H1 (cell line): ENCODE measurements at regions of chr2 and their contacts with region 1.

Region 1: GRCh38 chr2:143686585-143687164 is 557.5 kb downstream of the ARHGAP15 start:
- DNase-seq: no peak
- H3K4me3 ChIP-seq: no peak overlapping the region
- H3K27ac ChIP-seq: no peak overlapping the region
- H3K4me1 ChIP-seq: peaks cover 0 to 7% (median under 1%) of the 10 kb centered on the region in 4 experiments; a peak in 1 of 7 replicates
- H3K27me3 ChIP-seq: no peaks in the 10 kb centered on the region
- CTCF ChIP-seq: peak in 2 of 3 experiments; percentile 12 to 55; a peak in 2 of 4 replicates
- EP300 ChIP-seq: no peak
- POLR2A ChIP-seq: no peak
- RAD21 ChIP-seq: peak; percentile 28 to 51; a peak in 3 of 4 replicates

Region 2: DNA sequence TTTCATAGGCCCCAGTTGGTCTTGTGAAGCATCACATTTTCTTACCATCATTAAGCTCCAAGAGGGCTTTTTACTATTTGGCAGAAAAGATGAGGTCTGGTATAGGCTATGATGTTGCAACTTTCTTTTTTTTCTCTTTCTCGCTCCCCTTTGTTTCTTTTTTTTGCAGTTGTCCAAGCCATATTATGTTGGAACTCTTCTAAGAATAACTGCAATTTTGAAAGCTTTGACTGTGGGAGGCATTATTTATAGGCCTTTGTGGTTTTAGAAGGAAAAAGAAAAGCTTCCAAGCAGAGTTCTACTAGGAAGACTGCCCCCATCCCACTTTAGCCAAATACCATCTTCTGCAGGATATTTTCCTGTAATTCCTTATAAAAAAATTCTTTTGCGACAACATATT is 14.2 kb after region 1 on chr2:
- CTCF ChIA-PET with region 1: interaction called, 12 read pairs
- POLR2A ChIA-PET with region 1: no interaction called
- DNase-seq: no peak
- H3K4me3 ChIP-seq: no peak overlapping the region
- H3K27ac ChIP-seq: no peak overlapping the region
- H3K4me1 ChIP-seq: no peaks in the 10 kb centered on the region; a peak in 1 of 7 replicates
- H3K27me3 ChIP-seq: no peaks in the 10 kb centered on the region
- CTCF ChIP-seq: no peak
- EP300 ChIP-seq: no peak
- POLR2A ChIP-seq: no peak
- RAD21 ChIP-seq: no peak

Region 3: DNA sequence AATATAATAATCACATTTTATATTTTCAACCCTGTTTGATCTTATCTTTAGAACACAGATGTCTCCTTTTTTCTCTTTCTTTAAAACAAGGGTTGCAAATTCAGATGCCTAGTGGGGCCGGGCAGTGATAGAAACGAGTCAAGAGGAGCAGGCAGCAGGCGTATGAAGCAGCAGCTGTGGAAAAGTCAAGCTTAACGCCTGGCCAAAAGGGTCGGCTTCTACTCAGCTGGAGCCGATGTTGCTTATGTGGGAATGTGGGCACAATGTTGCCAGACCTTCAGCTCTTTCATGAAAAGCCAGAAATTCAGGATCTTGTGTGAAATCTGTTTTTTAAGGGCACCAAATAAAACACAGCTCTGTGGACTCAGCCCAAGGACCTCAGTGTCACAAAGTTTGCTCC is 85.3 kb after region 1 on chr2:
- CTCF ChIA-PET with region 1: interaction called, 10 read pairs
- POLR2A ChIA-PET with region 1: no interaction called
- DNase-seq: no peak
- H3K4me3 ChIP-seq: no peak overlapping the region
- H3K27ac ChIP-seq: no peak overlapping the region
- H3K4me1 ChIP-seq: no peaks in the 10 kb centered on the region; a peak in 1 of 7 replicates
- H3K27me3 ChIP-seq: no peaks in the 10 kb centered on the region
- CTCF ChIP-seq: no peak
- EP300 ChIP-seq: no peak
- POLR2A ChIP-seq: no peak
- RAD21 ChIP-seq: no peak